Activated CD4-positive, alpha-beta T cell treated with anti-CD3 and anti-CD28 coated beads for 36 hours (primary cell): ENCODE measurements at regions of chr5 and their contacts with region 1.

Region 1: DNA sequence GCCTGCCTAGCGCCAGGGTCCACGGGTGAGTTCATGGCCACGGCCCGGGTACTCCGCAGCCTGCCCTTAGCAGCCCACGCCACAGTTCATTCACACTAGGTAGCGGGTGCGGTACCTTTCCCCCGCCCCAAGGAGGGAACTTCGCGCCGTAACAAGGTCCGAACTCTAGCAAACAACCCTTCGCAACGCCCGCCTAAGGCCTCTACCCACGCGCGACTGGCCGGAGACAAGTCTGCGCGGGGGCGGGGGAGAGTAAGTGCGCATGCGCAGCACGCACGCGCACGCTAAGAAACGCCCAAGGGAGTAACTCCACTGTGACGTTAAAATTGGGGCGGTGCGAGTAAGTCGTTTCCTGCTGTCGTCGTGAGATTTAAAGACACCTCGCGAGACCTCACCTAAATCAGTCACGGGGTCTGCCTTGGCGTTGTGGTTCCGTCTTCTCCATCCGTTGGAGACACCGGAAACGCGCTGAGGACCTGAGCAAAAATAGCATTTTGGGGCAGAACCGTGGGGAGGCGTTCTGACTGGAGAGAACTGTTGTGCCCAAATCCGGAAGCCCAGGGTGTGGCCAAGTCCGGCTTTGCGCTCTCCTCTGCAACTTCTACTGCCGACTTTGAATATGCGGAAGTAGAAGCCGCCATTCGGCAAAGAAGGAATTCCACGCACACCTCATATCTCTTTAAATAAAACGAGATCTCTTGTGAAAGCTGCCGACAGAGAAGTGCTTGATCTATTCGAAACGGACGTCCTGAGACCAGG is at the start of gene RAPGEF6:
- DNase-seq: peak; percentile 98
- ATAC-seq: peak; percentile 89
- H3K4me3 Mint-ChIP-seq: no peak within 1 kb of the TSS
- H3K27ac Mint-ChIP-seq: peak within 1 kb of the TSS; percentile 93
- H3K4me1 Mint-ChIP-seq: peaks cover 22% of the 10 kb centered on the region
- H3K27me3 Mint-ChIP-seq: no peaks in the 10 kb centered on the region
- total RNA-seq, gene RAPGEF6: 26.5 to 30.5 TPM

Region 2: GRCh38 chr5:130896636-130897035 is 738.5 kb before region 1 on chr5:
- CTCF ChIA-PET with region 1: no interaction called
- POLR2A ChIA-PET with region 1: no interaction called
- intact Hi-C with region 1: no loop called
- DNase-seq: no peak
- ATAC-seq: no peak
- H3K4me3 Mint-ChIP-seq: no peak overlapping the region
- H3K27ac Mint-ChIP-seq: no peak overlapping the region
- H3K4me1 Mint-ChIP-seq: no peaks in the 10 kb centered on the region
- H3K27me3 Mint-ChIP-seq: peaks cover 18% of the 10 kb centered on the region

Region 3: DNA sequence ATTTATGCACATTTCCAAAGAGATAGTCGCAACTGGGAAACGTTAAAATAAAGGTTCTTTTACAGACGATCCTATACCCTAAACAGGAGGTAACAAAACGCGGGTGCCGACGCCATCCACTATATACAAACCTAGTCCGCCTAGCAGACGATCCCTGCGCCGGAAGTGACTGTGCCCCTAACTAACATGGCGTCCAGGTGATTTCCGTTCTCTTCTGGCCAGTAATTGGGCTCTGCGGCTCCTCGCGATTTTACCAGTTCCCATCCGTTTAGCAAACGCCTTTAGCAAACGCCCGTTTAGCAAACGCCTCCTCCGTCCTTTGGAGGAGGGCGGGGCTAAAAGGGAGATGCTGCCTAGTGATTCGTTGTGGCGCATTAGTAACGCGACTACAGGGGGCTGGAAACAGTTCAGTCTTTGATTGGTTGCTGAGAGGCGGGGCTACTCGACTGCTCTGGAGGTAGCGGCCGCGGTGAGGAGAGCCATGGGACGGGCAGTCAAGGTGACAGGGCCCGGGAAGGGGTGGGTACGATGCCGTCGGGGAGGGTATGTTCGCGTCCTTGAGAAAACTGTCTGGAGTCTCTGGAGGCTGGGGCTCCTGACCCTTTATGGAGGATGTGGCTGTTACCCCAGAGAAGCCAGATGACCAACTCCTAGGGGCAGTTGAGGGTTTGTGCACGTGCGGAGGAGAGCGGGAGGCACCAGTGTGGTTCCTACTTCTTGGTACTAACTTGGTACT is 464.5 kb before region 1 on chr5 and contains the start of gene LYRM7:
- CTCF ChIA-PET with region 1: no interaction called
- POLR2A ChIA-PET with region 1: no interaction called
- intact Hi-C with region 1: loop called in 1 of 2 experiments (anchors 1 kb)
- DNase-seq: peak; percentile 97
- ATAC-seq: peak; percentile 96
- H3K4me3 Mint-ChIP-seq: peak within 1 kb of the TSS; percentile 95
- H3K27ac Mint-ChIP-seq: peak within 1 kb of the TSS; percentile 93
- H3K4me1 Mint-ChIP-seq: peaks cover 34% of the 10 kb centered on the region
- H3K27me3 Mint-ChIP-seq: no peaks in the 10 kb centered on the region
- total RNA-seq, gene LYRM7: 16.0 to 20.7 TPM

Region 4: DNA sequence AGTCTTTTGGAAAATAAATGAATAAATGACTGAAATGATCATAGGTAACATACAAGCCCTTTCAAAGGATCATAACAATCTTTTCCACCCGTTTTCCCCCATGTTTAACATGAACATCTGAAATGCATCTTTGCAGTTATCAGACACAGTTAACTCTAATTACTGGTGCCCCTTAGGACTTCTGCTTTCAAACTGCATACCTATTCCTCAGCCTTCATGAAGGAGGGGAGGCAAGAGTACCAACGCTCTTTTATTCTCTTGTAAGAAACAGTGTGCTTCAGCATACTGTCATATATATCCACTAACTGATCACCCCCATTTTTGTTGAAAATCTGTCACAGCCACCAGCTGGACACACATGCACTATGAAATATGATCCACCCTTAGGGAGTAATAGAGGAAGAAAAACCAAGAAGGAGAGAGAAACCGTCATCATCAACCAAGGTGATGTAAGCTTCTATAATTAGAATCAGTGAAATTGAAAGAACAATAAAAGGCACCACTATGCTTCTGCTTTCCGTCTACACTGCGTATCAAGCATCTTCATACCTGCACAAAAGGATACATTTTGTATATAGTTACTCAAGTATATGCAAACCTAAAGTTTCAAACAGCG is 98.9 kb before region 1 on chr5:
- CTCF ChIA-PET with region 1: interaction called, 6 read pairs
- POLR2A ChIA-PET with region 1: no interaction called
- intact Hi-C with region 1: loop called (anchors 2 to 5 kb)
- DNase-seq: peak; percentile 20
- ATAC-seq: peak; percentile 48
- H3K4me3 Mint-ChIP-seq: peak overlapping the region; percentile 26
- H3K27ac Mint-ChIP-seq: peak overlapping the region; percentile 86
- H3K4me1 Mint-ChIP-seq: peaks cover 86% of the 10 kb centered on the region
- H3K27me3 Mint-ChIP-seq: no peaks in the 10 kb centered on the region

Region 5: DNA sequence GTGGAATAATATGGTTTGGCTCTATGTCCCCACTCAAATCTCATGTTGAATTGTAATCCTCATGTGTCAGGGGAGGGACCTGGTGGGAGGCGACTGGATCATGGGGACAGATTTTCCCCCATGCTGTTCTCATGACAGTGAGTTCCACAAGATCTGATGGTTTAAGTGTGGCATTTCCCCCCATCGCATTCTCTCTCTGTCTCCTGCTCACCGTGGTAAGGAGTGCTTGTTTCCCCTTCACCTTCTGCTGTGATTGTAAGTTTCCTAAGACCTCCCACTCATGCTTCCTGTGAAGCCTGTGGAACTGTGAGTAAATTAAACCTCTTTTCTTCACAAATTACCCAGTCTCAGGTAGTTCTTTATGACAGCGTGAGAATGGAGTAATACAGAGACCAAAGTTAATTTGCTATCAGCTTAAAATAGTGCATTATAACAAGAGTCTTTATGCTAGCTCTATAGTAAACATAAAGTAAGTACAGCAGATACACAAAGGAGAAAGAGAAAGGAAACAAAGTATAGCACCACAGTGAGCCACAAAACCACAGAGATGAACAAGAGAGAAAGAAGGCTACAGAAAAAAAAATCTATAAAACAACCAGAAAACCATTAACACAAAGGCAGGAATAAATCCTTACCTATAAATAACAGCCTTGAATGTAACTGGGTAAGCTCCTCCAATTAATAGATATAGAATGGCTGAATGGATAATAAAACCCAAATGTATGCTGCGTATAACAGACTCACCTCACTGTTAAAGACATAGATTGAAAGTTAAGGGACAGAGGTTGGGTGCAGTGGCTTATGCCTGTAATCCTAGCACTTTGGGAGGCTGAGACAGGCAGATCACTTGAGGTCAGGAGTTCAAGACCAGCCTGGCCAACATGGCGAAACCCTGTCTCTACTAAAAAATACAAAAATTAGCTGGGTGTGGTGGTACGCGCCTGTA is 39.8 kb before region 1 on chr5:
- CTCF ChIA-PET with region 1: no interaction called
- POLR2A ChIA-PET with region 1: no interaction called
- intact Hi-C with region 1: no loop called
- DNase-seq: peak; percentile 38
- ATAC-seq: peak; percentile 86
- H3K4me3 Mint-ChIP-seq: peak overlapping the region; percentile 4
- H3K27ac Mint-ChIP-seq: peak overlapping the region; percentile 83
- H3K4me1 Mint-ChIP-seq: peaks cover 57% of the 10 kb centered on the region
- H3K27me3 Mint-ChIP-seq: no peaks in the 10 kb centered on the region

Region 6: GRCh38 chr5:131661931-131662330 is 26.8 kb after region 1 on chr5:
- CTCF ChIA-PET with region 1: no interaction called
- POLR2A ChIA-PET with region 1: no interaction called
- intact Hi-C with region 1: no loop called
- DNase-seq: no peak
- ATAC-seq: no peak
- H3K4me3 Mint-ChIP-seq: no peak overlapping the region
- H3K27ac Mint-ChIP-seq: no peak overlapping the region
- H3K4me1 Mint-ChIP-seq: no peaks in the 10 kb centered on the region
- H3K27me3 Mint-ChIP-seq: no peaks in the 10 kb centered on the region

Region 7: DNA sequence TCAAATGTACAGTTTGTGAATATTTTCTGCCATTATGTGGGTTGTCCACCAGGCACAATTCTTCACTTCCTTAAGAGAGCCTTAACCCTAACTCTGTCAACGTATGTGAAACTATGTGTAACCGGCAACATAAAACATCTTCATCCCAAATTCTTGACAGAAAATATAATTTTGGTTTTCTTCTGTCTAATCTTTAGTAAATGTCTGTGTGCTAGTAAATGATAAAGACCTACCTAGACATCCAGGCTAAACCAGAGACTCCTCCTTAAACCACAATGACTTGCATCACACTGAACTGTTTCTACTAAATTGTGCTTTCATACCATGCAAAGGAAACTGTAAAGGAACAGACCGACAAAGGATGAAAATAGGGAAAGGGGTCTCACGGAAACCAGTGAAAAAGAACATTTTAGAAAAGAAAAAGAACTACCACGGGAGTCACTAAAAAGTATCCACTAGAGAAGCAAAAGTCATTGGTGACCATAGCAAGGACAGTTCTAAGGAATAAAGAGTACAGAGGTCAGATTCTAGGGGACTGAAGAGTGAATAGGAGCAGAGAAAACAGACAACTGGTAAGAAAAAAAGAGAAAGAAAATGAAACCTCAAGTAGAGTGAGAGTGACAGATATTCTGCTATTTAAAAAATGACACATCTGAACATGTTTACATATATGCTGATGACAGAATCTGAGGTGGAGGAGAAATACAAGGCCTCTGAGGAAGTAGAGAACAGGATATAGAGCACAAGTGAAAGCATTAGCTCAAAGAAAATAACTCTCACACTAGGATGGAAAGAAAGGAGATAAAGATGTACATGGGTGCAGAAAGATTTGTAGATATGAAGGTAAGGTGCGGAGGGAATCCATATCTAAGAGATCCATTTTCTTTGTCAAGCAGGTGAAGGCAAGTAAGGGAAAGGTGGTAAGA is 112.3 kb after region 1 on chr5:
- CTCF ChIA-PET with region 1: interaction called, 3 read pairs
- POLR2A ChIA-PET with region 1: no interaction called
- intact Hi-C with region 1: loop called (anchors 1 to 2 kb)
- DNase-seq: no peak
- ATAC-seq: peak; percentile 92
- H3K4me3 Mint-ChIP-seq: peak overlapping the region; percentile 54
- H3K27ac Mint-ChIP-seq: peak overlapping the region; percentile 93
- H3K4me1 Mint-ChIP-seq: peaks cover 46% of the 10 kb centered on the region
- H3K27me3 Mint-ChIP-seq: no peaks in the 10 kb centered on the region

Region 8: GRCh38 chr5:132293066-132293991 is 658.2 kb after region 1 on chr5:
- CTCF ChIA-PET with region 1: no interaction called
- POLR2A ChIA-PET with region 1: no interaction called
- intact Hi-C with region 1: loop called in 1 of 2 experiments (anchors 10 kb)
- DNase-seq: peak; percentile 89
- ATAC-seq: peak; percentile 45
- H3K4me3 Mint-ChIP-seq: peak overlapping the region; percentile 88
- H3K27ac Mint-ChIP-seq: peak overlapping the region; percentile 94
- H3K4me1 Mint-ChIP-seq: peaks cover 22% of the 10 kb centered on the region
- H3K27me3 Mint-ChIP-seq: peaks cover 10% of the 10 kb centered on the region

Region 9: GRCh38 chr5:132556763-132557477 is 921.7 kb after region 1 on chr5 and contains the start of gene RAD50:
- CTCF ChIA-PET with region 1: no interaction called
- POLR2A ChIA-PET with region 1: no interaction called
- intact Hi-C with region 1: loop called in 1 of 2 experiments (anchors 2 kb)
- DNase-seq: peak; percentile 96
- ATAC-seq: peak; percentile 99
- H3K4me3 Mint-ChIP-seq: peak within 1 kb of the TSS; percentile 96
- H3K27ac Mint-ChIP-seq: peak within 1 kb of the TSS; percentile 98
- H3K4me1 Mint-ChIP-seq: peaks cover 21% of the 10 kb centered on the region
- H3K27me3 Mint-ChIP-seq: no peaks in the 10 kb centered on the region
- total RNA-seq, gene RAD50: 46.0 to 51.3 TPM